Gastrocnemius medialis (tissue), 4 donors: ENCODE measurements at regions of chr6 and their contacts with region 1.

Region 1: GRCh38 chr6:32393665-32394420 is 13.1 kb downstream of the BTNL2 start:
- DNase-seq: no peak
- ATAC-seq: peak; percentile 70 to 71
- H3K4me3 ChIP-seq: no peak overlapping the region
- H3K27ac ChIP-seq: peak overlapping the region; percentile 38 to 58 (median 48)
- H3K4me1 ChIP-seq: no peaks in the 10 kb centered on the region
- H3K27me3 ChIP-seq: no peaks in the 10 kb centered on the region
- CTCF ChIP-seq: no peak
- POLR2A ChIP-seq: no peak

Region 2: GRCh38 chr6:32255199-32256153 is 138.4 kb before region 1 on chr6:
- in situ Hi-C with region 1: no loop called
- intact Hi-C with region 1: loop called (anchors 10 kb)
- DNase-seq: peak; percentile 33 to 58
- ATAC-seq: peak; percentile 96 to 98
- H3K4me3 ChIP-seq: peak overlapping the region; percentile 32 to 46 (median 38)
- H3K27ac ChIP-seq: peak overlapping the region; percentile 53 to 74 (median 72)
- H3K4me1 ChIP-seq: peaks cover 6% of the 10 kb centered on the region in 2 donors
- H3K27me3 ChIP-seq: peaks cover 5 to 11% (median 7%) of the 10 kb centered on the region in 3 donors
- CTCF ChIP-seq: peak; percentile 15 to 63 (median 50)
- POLR2A ChIP-seq: no peak